ENCODE measurements at regions of chr2 and their contacts with region 1.

Region 1: DNA sequence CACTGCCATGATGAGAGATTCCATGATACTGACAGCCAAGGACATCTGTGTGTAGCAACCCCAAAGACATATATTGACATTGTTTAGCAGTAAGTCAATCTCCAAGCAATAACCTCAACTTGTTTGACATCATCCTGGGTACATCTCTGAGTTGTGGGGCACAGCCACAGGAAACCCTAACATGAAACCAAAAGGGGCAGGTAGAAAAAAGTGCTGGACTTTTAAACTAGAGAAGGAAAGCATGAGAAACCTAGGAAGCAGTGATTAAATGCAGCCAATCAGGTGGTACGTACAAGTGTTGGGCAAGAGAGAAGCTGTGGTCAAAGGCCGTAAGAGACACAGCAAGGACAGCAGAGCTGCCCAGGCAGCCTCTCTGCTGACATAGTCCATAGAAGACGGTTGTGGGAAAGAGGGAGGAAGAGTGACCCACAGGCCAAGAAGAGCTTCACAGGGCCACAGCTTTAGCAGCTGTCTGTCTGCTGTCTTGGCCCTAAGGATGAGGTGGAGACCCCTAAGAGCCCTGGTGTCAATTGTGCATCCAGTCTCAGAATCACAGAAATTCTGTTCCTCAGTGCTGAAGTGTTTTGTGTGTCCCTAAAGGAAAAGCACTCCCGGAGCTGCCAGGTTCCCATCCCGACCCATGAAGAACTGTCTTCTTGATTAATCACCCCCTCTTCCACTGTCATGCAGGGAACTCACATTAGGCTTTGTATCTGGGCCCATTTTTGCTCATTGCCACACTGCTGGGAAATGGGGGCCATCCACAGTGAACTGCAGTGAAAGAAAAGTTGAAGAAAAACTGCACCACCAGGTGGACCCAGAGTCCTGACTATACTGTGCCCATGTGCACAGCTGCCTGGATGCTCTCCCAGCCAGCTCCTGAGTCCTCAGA is 25.4 kb upstream of the CHN1 start:
- DNase-seq: peak; percentile 52
- H3K4me3 ChIP-seq: no peak overlapping the region
- H3K27ac ChIP-seq: no peak overlapping the region
- H3K4me1 ChIP-seq: no peaks in the 10 kb centered on the region
- H3K27me3 ChIP-seq: no peaks in the 10 kb centered on the region
- CTCF ChIP-seq: peak; percentile 24 to 60
- POLR2A ChIP-seq: no peak

Region 2: DNA sequence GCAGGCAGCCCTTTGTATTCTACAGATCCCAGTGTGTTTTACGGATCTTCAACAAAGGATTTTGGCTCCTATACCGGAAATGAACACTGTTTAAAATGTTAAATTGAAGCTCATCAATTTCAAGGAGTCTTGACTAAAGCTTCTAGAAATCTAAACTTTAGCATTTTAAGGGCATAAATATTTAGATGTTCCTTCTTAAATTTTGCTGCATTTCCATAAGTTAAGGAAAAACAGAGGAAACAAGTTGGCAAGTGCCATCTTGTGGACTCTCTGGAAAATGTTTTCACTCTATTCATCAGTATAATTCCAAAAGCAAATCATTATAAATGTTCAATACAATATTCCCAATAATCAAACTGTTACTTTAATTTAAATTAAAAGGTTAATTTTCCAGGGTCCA is 45.0 kb before region 1 on chr2:
- CTCF ChIA-PET with region 1: interaction called, 13 read pairs
- POLR2A ChIA-PET with region 1: no interaction called
- dilution Hi-C with region 1: no loop called
- intact Hi-C with region 1: no loop called
- DNase-seq: peak; percentile 55
- H3K4me3 ChIP-seq: no peak overlapping the region
- H3K27ac ChIP-seq: no peak overlapping the region
- H3K4me1 ChIP-seq: no peaks in the 10 kb centered on the region
- H3K27me3 ChIP-seq: no peaks in the 10 kb centered on the region
- CTCF ChIP-seq: peak; percentile 21 to 36
- POLR2A ChIP-seq: no peak

Region 3: GRCh38 chr2:175004980-175005732 is 25.5 kb before region 1 on chr2 and contains the start of gene CHN1:
- CTCF ChIA-PET with region 1: interaction called, 12 read pairs
- POLR2A ChIA-PET with region 1: interaction called, 4 read pairs
- dilution Hi-C with region 1: no loop called
- intact Hi-C with region 1: no loop called
- DNase-seq: peak; percentile 85
- H3K4me3 ChIP-seq: peak within 1 kb of the TSS; percentile 70 to 89 (median 83)
- H3K27ac ChIP-seq: peak within 1 kb of the TSS; percentile 35
- H3K4me1 ChIP-seq: peaks cover 18% of the 10 kb centered on the region
- H3K27me3 ChIP-seq: peaks cover 0 to 3% of the 10 kb centered on the region in 2 experiments
- CTCF ChIP-seq: no peak
- POLR2A ChIP-seq: peak; percentile 71
- total RNA-seq, gene CHN1: 23.3 and 29.0 TPM in 2 replicates

Region 4: GRCh38 chr2:175010848-175011254 is 19.8 kb before region 1 on chr2:
- CTCF ChIA-PET with region 1: interaction called, 12 read pairs
- POLR2A ChIA-PET with region 1: no interaction called
- dilution Hi-C with region 1: no loop called
- intact Hi-C with region 1: no loop called
- DNase-seq: peak; percentile 59
- H3K4me3 ChIP-seq: no peak overlapping the region
- H3K27ac ChIP-seq: no peak overlapping the region
- H3K4me1 ChIP-seq: peaks cover 29% of the 10 kb centered on the region
- H3K27me3 ChIP-seq: peaks cover 0 to 3% of the 10 kb centered on the region in 2 experiments
- CTCF ChIP-seq: no peak
- POLR2A ChIP-seq: no peak

Region 5: GRCh38 chr2:175181104-175181876 is 150.7 kb after region 1 on chr2 and contains the start of gene ATP5MC3:
- CTCF ChIA-PET with region 1: no interaction called
- POLR2A ChIA-PET with region 1: no interaction called
- dilution Hi-C with region 1: no loop called
- intact Hi-C with region 1: loop called (anchors 10 kb)
- DNase-seq: peak; percentile 86
- H3K4me3 ChIP-seq: peak within 1 kb of the TSS; percentile 49 to 74 (median 69)
- H3K27ac ChIP-seq: peak within 1 kb of the TSS; percentile 48
- H3K4me1 ChIP-seq: peaks cover 6% of the 10 kb centered on the region
- H3K27me3 ChIP-seq: no peaks in the 10 kb centered on the region
- CTCF ChIP-seq: peak in 1 of 2 donors; percentile 25
- POLR2A ChIP-seq: peak; percentile 66
- total RNA-seq, gene ATP5MC3: 201 and 233 TPM in 2 replicates

Region 6: DNA sequence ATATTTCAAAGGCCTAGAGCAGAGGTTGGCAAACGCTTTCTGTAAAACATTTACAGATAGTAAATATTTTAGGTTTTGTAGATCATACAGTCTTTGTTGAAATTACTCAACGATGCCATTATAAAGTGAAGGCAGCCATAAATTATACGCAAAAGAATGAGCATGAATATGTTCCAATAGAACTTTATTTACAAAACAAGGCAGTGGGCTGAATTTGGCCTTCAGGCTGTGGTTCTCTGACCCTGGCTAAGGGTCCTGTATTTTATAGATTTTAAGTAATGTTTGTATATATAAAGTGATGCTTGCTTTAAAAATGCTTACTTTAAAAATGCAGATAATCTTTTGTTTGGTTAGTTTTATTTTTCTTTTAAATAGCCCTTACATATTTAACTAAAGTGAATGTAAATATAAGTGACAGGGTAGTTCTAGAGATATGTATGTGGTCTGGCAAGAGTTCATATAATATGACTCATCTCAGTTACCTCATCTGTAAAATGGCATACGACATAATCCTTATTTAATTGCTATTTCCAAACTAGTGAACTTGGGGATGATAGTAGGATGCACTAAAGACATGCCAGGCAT is 202.6 kb after region 1 on chr2:
- CTCF ChIA-PET with region 1: no interaction called
- POLR2A ChIA-PET with region 1: no interaction called
- dilution Hi-C with region 1: no loop called
- intact Hi-C with region 1: no loop called
- DNase-seq: no peak
- H3K4me3 ChIP-seq: no peak overlapping the region
- H3K27ac ChIP-seq: no peak overlapping the region
- H3K4me1 ChIP-seq: no peaks in the 10 kb centered on the region
- H3K27me3 ChIP-seq: no peaks in the 10 kb centered on the region
- CTCF ChIP-seq: no peak
- POLR2A ChIP-seq: no peak

Region 7: GRCh38 chr2:175282290-175282689 is 251.7 kb after region 1 on chr2:
- CTCF ChIA-PET with region 1: interaction called, 21 read pairs
- POLR2A ChIA-PET with region 1: no interaction called
- dilution Hi-C with region 1: no loop called
- intact Hi-C with region 1: loop called (anchors 1 kb)
- DNase-seq: peak; percentile 44
- H3K4me3 ChIP-seq: no peak overlapping the region
- H3K27ac ChIP-seq: no peak overlapping the region
- H3K4me1 ChIP-seq: no peaks in the 10 kb centered on the region
- H3K27me3 ChIP-seq: peaks cover 17 to 18% of the 10 kb centered on the region in 2 experiments
- CTCF ChIP-seq: peak; percentile 20 to 26
- POLR2A ChIP-seq: no peak

Region 8: DNA sequence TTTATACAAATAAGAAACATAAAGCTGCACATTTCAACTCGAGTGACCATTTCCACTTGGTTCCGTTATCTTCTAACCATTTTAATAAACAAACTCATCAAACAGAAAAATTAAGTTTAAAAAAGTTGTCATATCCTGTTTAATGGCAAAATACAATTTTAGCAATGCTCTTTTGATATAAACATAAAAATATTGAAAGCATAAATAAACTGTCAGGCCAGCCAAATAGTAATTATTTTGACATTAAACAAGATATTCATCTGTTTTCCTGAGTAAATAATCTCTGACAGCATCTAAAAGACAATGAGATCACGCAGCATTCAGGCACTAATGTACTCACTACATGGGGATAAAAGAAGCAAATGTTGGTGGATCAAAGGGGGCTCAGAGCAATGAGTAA is 296.2 kb after region 1 on chr2:
- CTCF ChIA-PET with region 1: interaction called, 35 read pairs
- POLR2A ChIA-PET with region 1: no interaction called
- dilution Hi-C with region 1: no loop called
- intact Hi-C with region 1: no loop called
- DNase-seq: no peak
- H3K4me3 ChIP-seq: no peak overlapping the region
- H3K27ac ChIP-seq: no peak overlapping the region
- H3K4me1 ChIP-seq: no peaks in the 10 kb centered on the region
- H3K27me3 ChIP-seq: no peaks in the 10 kb centered on the region
- CTCF ChIP-seq: no peak
- POLR2A ChIP-seq: no peak